ENCODE measurements at regions of chr14 and their contacts with region 1.

Region 1: DNA sequence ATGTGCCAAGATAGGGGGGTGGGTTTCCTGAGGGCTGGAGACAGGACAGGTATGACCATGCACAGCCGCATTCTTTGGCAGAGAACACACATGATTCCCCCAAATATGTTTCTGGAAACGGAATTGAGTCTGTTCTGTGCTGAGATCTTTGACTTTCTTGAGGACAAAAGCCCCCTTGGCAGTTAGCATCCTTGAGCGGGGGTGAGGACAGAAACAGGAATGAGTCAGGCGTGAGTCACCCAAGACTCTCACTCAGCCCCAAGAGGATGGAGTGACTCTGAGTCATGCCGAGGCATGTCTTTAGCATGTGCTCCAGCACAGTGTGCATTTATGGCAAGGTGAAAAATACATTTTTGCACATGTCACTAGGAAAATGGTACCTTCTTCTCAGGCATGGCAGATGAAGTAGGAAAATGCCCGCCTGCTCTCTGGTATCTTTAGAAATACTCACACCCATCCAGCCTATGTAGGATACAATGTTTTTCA is 52.1 kb downstream of the DAD1 start:
- DNase-seq: peak; percentile 93
- H3K4me3 Mint-ChIP-seq: peak overlapping the region; percentile 84
- H3K27ac Mint-ChIP-seq: peak overlapping the region; percentile 93
- H3K4me1 Mint-ChIP-seq: peaks cover 89% of the 10 kb centered on the region
- H3K27me3 Mint-ChIP-seq: no peaks in the 10 kb centered on the region

Region 2: GRCh38 chr14:21997300-21997699 is 539.6 kb before region 1 on chr14:
- intact Hi-C with region 1: loop called (anchors 5 kb)
- DNase-seq: peak; percentile 82
- H3K4me3 Mint-ChIP-seq: peak overlapping the region; percentile 95
- H3K27ac Mint-ChIP-seq: peak overlapping the region; percentile 97
- H3K4me1 Mint-ChIP-seq: peaks cover 12% of the 10 kb centered on the region
- H3K27me3 Mint-ChIP-seq: no peaks in the 10 kb centered on the region

Region 3: GRCh38 chr14:22497144-22497423 is 39.8 kb before region 1 on chr14:
- intact Hi-C with region 1: loop called (anchors 5 kb)
- DNase-seq: peak; percentile 66
- H3K4me3 Mint-ChIP-seq: peak overlapping the region; percentile 87
- H3K27ac Mint-ChIP-seq: peak overlapping the region; percentile 99
- H3K4me1 Mint-ChIP-seq: peaks cover 30% of the 10 kb centered on the region
- H3K27me3 Mint-ChIP-seq: no peaks in the 10 kb centered on the region

Region 4: GRCh38 chr14:22505697-22506377 is 31.1 kb before region 1 on chr14:
- intact Hi-C with region 1: loop called (anchors 2 kb)
- DNase-seq: peak; percentile 71
- H3K4me3 Mint-ChIP-seq: peak overlapping the region; percentile 87
- H3K27ac Mint-ChIP-seq: peak overlapping the region; percentile 97
- H3K4me1 Mint-ChIP-seq: peaks cover 47% of the 10 kb centered on the region
- H3K27me3 Mint-ChIP-seq: no peaks in the 10 kb centered on the region

Region 5: GRCh38 chr14:22549981-22550673 is 13.2 kb after region 1 on chr14:
- intact Hi-C with region 1: loop called (anchors 1 kb)
- DNase-seq: peak; percentile 91
- H3K4me3 Mint-ChIP-seq: peak overlapping the region; percentile 84
- H3K27ac Mint-ChIP-seq: peak overlapping the region; percentile 93
- H3K4me1 Mint-ChIP-seq: peaks cover 91% of the 10 kb centered on the region
- H3K27me3 Mint-ChIP-seq: no peaks in the 10 kb centered on the region

Region 6: DNA sequence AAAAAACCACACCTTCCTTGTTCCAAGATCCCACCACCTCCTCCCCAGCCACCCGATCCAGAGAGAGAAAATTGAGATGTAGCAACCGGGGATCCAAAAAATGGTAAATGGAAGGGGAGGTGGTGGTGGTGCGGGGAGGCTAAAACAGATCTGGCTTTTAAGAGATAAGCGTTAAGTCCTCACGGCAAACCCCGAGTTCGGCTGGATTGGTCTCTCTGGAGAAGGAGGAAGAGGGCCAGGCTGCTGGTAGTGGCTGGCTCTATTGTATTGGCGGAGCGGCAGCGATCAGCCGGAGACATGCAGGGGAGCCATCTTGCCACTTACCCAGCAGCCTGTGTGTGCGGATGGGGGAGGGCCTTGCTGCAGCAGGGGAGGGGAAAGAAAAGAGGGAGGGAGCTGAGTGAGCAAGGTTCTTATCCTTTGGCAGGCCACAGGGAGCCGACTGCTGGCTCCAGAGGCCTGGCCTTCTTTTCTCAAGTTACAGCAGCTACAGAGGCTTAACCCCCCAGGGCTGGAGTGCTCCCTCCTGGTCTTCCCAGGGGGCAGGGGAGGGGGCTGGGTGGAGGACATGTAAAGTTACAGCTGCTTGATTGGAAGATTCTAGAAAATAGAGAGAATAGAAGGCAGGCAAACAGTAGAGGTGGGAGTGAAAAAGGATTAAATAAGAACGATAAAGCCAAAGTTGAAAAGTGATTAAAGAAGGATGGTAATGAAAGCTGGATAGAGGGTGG is 534.5 kb after region 1 on chr14:
- intact Hi-C with region 1: no loop called
- DNase-seq: peak; percentile 94
- H3K4me3 Mint-ChIP-seq: peak overlapping the region; percentile 98
- H3K27ac Mint-ChIP-seq: peak overlapping the region; percentile 90
- H3K4me1 Mint-ChIP-seq: peaks cover 23% of the 10 kb centered on the region
- H3K27me3 Mint-ChIP-seq: no peaks in the 10 kb centered on the region

Measured in activated CD4-positive, alpha-beta T cell treated with anti-CD3 and anti-CD28 coated beads, Interleukin-2, amount 10 ng/mL, durations not matched to agents 24 days and 14 days (primary cell).